Activated B cell treated with CpG ODN at 0.5 μM for 24 hours (primary cell): ENCODE measurements at regions of chr2 and their contacts with region 1.

Region 1: GRCh38 chr2:157876066-157876787 is at the start of gene ACVR1:
- DNase-seq: peak; percentile 76
- ATAC-seq: peak; percentile 80
- H3K4me3 Mint-ChIP-seq: peak within 1 kb of the TSS; percentile 88
- H3K27ac Mint-ChIP-seq: peak within 1 kb of the TSS; percentile 76
- H3K4me1 Mint-ChIP-seq: peaks cover 21% of the 10 kb centered on the region
- H3K27me3 Mint-ChIP-seq: no peaks in the 10 kb centered on the region
- CTCF ChIP-seq: no peak
- total RNA-seq, gene ACVR1: 4.4 and 4.6 TPM in 2 replicates

Region 2: DNA sequence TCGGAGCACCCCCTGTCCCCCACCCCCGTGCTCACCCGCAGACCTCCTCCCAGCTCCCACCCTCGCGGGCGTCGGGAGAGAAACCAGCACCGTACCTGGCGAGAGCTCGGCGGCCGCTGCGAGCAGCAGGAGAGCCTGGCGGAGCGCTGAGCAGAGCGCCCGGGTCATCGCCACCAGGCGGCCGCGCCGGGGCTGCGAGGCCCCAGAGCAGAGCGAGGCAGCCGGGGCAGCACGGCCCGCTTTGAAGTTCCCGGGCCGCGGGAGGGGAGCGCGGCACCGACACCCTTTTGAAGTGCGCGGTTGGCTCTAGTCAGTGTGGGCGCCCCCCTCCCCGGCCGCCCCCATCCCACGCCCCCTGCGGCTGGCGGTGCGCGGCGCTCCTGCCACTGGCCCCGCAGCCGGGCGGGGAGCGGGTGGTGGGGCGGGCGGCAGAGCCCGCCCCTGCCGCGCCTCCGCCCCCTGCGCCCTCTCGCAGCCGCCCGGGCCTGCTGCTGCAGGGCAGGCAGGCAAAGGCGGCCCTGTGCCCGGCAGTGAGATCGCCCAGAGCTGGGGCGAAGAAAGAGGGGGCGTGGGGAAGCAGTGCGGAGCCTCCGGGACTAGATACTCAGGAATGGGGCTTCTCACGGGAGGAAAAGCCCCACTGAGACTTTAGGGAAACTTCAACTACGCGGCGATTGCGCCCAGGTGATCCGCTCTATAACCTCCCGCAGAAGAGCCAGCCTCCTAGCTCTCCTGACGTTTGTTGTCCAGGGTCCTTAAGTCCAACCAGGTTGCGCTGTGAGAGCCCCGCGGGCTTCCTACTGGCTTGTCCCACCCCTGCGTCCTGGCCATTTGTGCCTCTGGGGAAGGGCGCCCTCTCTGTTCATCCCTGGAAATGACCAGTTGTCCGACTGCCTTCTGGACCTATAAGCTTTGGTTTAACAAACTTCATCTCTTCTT is 247.5 kb before region 1 on chr2 and contains the start of gene ACVR1C:
- CTCF ChIA-PET with region 1: no interaction called
- POLR2A ChIA-PET with region 1: no interaction called
- intact Hi-C with region 1: loop called (anchors 5 kb)
- DNase-seq: peak; percentile 55
- ATAC-seq: peak; percentile 87
- H3K4me3 Mint-ChIP-seq: peak within 1 kb of the TSS; percentile 82
- H3K27ac Mint-ChIP-seq: peak within 1 kb of the TSS; percentile 12
- H3K4me1 Mint-ChIP-seq: peaks cover 22% of the 10 kb centered on the region
- H3K27me3 Mint-ChIP-seq: peaks cover 12% of the 10 kb centered on the region
- CTCF ChIP-seq: no peak
- total RNA-seq, gene ACVR1C: 0.20 and 0.32 TPM in 2 replicates

Region 3: GRCh38 chr2:157898591-157898996 is 22.4 kb after region 1 on chr2:
- CTCF ChIA-PET with region 1: interaction called, 5 read pairs
- POLR2A ChIA-PET with region 1: interaction called, 31 read pairs
- intact Hi-C with region 1: loop called (anchors 1 kb)
- DNase-seq: no peak
- ATAC-seq: no peak
- H3K4me3 Mint-ChIP-seq: no peak overlapping the region
- H3K27ac Mint-ChIP-seq: no peak overlapping the region
- H3K4me1 Mint-ChIP-seq: peaks cover 33% of the 10 kb centered on the region
- H3K27me3 Mint-ChIP-seq: no peaks in the 10 kb centered on the region
- CTCF ChIP-seq: no peak

Region 4: GRCh38 chr2:158191076-158191895 is 315.1 kb after region 1 on chr2:
- CTCF ChIA-PET with region 1: no interaction called
- POLR2A ChIA-PET with region 1: no interaction called
- intact Hi-C with region 1: loop called (anchors 10 kb)
- DNase-seq: no peak
- ATAC-seq: peak; percentile 82
- H3K4me3 Mint-ChIP-seq: peak overlapping the region; percentile 80
- H3K27ac Mint-ChIP-seq: peak overlapping the region; percentile 94
- H3K4me1 Mint-ChIP-seq: peaks cover 31% of the 10 kb centered on the region
- H3K27me3 Mint-ChIP-seq: no peaks in the 10 kb centered on the region
- CTCF ChIP-seq: no peak